ENCODE measurements at regions of chr1 and their contacts with region 1.

Region 1: GRCh38 chr1:24150234-24151174 is 7.6 kb upstream of the IL22RA1 start:
- DNase-seq: peak; percentile 83
- H3K4me3 ChIP-seq: peak overlapping the region in 1 of 3 experiments; percentile 19
- H3K27ac ChIP-seq: no peak overlapping the region
- H3K4me1 ChIP-seq: peaks cover 11% of the 10 kb centered on the region
- H3K27me3 ChIP-seq: peaks cover 11% of the 10 kb centered on the region in 2 experiments
- CTCF ChIP-seq: peak; percentile 79 to 94
- POLR2A ChIP-seq: no peak

Region 2: GRCh38 chr1:24111996-24112779 is 38.3 kb before region 1 on chr1 and contains the start of gene MYOM3:
- CTCF ChIA-PET with region 1: interaction called, 26 read pairs
- POLR2A ChIA-PET with region 1: no interaction called
- dilution Hi-C with region 1: no loop called
- intact Hi-C with region 1: no loop called
- DNase-seq: peak; percentile 63
- H3K4me3 ChIP-seq: no peak within 1 kb of the TSS
- H3K27ac ChIP-seq: no peak within 1 kb of the TSS
- H3K4me1 ChIP-seq: peaks cover 25% of the 10 kb centered on the region
- H3K27me3 ChIP-seq: peaks cover 0 to 2% of the 10 kb centered on the region in 2 experiments
- CTCF ChIP-seq: peak; percentile 32 to 60
- POLR2A ChIP-seq: no peak
- total RNA-seq, gene MYOM3: 0.18 and 0.40 TPM in 2 replicates

Region 3: DNA sequence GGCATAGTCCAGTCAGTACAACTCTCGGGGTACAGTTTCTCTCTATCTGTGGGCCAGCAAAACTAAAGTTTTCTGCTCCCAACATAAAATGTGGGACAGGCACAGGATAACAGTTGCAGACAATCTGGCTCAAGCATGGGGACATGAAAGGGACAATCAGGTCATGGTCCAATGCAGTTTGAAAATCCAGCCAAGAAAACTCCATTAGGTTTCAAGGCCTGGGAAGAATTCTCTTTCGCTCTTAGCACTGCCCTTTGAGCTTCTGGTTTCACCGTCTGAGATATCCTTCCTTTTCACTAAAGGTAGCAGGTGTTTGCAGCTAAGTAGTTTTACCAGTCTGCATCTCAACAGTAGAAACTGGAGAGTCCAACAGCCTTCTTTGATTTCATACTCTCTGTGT is 13.5 kb after region 1 on chr1:
- CTCF ChIA-PET with region 1: interaction called, 20 read pairs
- POLR2A ChIA-PET with region 1: no interaction called
- dilution Hi-C with region 1: no loop called
- intact Hi-C with region 1: no loop called
- DNase-seq: no peak
- H3K4me3 ChIP-seq: no peak overlapping the region
- H3K27ac ChIP-seq: no peak overlapping the region
- H3K4me1 ChIP-seq: no peaks in the 10 kb centered on the region
- H3K27me3 ChIP-seq: peaks cover 2 to 3% of the 10 kb centered on the region in 2 experiments
- CTCF ChIP-seq: no peak
- POLR2A ChIP-seq: no peak

Region 4: DNA sequence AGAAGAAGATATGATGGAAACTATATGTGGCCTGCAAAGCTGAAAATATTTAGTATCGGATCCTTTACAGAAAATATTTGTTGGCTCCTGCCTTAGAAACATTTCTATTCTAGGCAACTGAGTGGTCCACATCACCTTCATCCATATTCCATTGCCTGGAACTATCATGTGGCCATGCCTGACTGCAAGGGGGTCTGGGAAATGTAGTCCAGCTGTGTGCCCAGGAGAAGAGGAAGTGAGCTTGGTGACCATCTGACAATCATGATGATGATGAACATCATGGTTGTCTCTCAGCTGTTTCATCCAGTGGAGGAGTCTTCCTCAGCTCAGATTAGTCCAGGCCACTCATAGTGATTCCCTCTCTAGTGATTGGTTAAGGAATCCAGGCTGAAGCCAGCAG is 98.4 kb after region 1 on chr1:
- CTCF ChIA-PET with region 1: no interaction called
- POLR2A ChIA-PET with region 1: no interaction called
- dilution Hi-C with region 1: no loop called
- intact Hi-C with region 1: no loop called
- DNase-seq: no peak
- H3K4me3 ChIP-seq: no peak overlapping the region
- H3K27ac ChIP-seq: no peak overlapping the region
- H3K4me1 ChIP-seq: no peaks in the 10 kb centered on the region
- H3K27me3 ChIP-seq: peaks cover 0 to 2% of the 10 kb centered on the region in 2 experiments
- CTCF ChIP-seq: no peak
- POLR2A ChIP-seq: no peak

Region 5: DNA sequence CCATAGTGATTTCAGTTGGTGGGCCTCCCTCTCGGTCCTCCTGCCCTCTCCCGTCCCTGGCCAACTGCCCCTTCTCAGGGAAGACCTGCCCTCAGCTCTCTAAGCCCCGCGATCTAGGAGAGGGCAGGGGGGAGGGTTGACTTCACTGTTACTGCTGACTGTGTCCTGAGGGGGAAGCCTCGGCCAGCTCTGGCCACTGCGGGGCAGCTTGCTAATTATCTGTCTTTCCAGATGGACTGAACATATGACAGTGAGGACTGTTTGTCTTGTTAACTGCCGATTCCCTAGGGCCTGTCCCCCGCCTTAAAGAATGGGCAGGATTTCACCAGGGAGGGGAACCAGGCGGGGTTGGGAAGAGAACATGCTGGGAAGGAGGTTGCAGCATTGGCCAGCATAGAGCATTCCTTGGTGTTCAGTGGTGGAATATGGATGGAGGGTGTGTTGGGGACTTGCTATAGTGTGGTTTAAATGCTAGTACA is 288.0 kb after region 1 on chr1:
- CTCF ChIA-PET with region 1: no interaction called
- POLR2A ChIA-PET with region 1: no interaction called
- dilution Hi-C with region 1: no loop called
- intact Hi-C with region 1: no loop called
- DNase-seq: no peak
- H3K4me3 ChIP-seq: no peak overlapping the region
- H3K27ac ChIP-seq: no peak overlapping the region
- H3K4me1 ChIP-seq: no peaks in the 10 kb centered on the region
- H3K27me3 ChIP-seq: no peaks in the 10 kb centered on the region
- CTCF ChIP-seq: no peak
- POLR2A ChIP-seq: no peak

Region 6: DNA sequence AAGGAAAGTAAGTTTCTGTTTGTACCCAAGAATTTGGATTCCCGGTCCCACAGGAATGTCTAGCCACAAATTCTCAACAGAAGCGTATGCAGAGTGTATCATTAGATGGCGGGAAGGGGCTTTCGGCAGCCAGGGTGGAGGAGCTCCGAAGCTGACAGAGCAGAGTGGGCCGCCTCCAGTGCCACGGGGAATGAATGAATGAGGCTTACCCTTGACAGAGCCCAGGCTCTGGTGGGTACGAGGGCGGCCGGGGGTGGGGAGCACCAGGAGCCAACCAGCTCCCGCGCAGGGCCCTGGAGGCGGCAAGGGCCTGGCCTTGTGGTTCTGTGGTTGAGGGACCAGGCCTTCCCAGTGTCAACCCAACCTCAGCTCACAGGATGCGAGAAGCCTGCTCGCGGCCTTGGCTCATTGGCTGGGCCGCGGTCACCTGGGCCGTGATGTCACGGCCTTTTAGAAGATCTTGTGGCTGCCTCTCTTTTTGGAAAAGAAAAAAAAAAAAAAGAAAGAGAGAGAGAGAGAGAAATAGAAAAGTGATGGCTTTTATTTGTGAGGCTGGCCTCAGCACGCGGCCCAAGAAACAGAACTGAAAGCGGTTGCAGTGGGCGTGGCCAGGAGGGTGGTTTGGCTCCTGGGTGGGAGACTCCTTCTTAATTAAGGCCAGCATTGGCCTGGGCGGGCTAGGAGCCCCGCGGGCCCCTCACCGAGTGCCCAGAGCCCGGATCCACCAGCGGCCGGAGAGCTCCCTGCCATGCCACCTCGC is 814.5 kb after region 1 on chr1:
- CTCF ChIA-PET with region 1: no interaction called
- POLR2A ChIA-PET with region 1: no interaction called
- dilution Hi-C with region 1: no loop called
- intact Hi-C with region 1: no loop called
- DNase-seq: no peak
- H3K4me3 ChIP-seq: no peak overlapping the region
- H3K27ac ChIP-seq: no peak overlapping the region
- H3K4me1 ChIP-seq: no peaks in the 10 kb centered on the region
- H3K27me3 ChIP-seq: no peaks in the 10 kb centered on the region
- CTCF ChIP-seq: no peak
- POLR2A ChIP-seq: no peak

Measured in endothelial cell of umbilical vein (primary cell).